CD4-positive, alpha-beta memory T cell (primary cell): ENCODE measurements at regions of chr10 and their contacts with region 1.

Region 1: DNA sequence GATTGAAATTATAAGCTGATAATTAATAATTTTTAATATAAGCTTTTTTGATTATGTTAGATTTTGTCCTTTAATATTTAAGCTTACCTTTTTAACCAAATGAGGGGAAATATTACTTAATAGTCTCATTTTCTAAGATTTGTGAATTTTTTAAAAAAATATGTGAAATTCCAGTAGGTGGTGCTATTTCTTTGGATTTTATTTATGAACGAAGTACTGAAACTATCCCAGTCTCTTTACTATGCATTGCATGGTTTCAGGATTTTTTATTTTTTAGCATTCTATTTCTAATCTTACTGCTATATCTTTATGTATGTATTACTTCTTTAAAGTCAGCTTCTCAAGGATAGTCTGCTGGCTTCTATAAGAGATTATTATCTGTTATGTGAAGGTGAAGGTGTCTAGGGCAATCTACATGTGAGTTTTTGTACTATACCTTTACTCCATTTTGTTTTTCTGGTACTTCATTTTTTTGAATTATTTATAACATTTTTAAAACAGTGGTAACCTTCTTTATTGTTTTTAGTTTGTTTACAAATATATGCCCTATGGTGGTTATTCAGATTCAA is 78.3 kb downstream of the ATRNL1 start:
- DNase-seq: no peak
- H3K4me3 ChIP-seq: no peak overlapping the region
- H3K4me3 Mint-ChIP-seq: no peak overlapping the region
- H3K27ac ChIP-seq: no peak overlapping the region
- H3K27ac Mint-ChIP-seq: no peak overlapping the region
- H3K4me1 ChIP-seq: no peaks in the 10 kb centered on the region
- H3K4me1 Mint-ChIP-seq: peaks cover 0 to 1% (median 0%) of the 10 kb centered on the region in 4 donors
- H3K27me3 ChIP-seq: no peaks in the 10 kb centered on the region
- H3K27me3 Mint-ChIP-seq: peaks cover 0 to 2% of the 10 kb centered on the region in 2 donors

Region 2: GRCh38 chr10:115379064-115379463 is 207.6 kb after region 1 on chr10:
- CTCF ChIA-PET with region 1: no interaction called
- POLR2A ChIA-PET with region 1: no interaction called
- intact Hi-C with region 1: no loop called
- DNase-seq: no peak
- H3K4me3 ChIP-seq: no peak overlapping the region
- H3K4me3 Mint-ChIP-seq: no peak overlapping the region
- H3K27ac ChIP-seq: no peak overlapping the region
- H3K27ac Mint-ChIP-seq: no peak overlapping the region
- H3K4me1 ChIP-seq: no peaks in the 10 kb centered on the region
- H3K4me1 Mint-ChIP-seq: no peaks in the 10 kb centered on the region
- H3K27me3 ChIP-seq: no peaks in the 10 kb centered on the region
- H3K27me3 Mint-ChIP-seq: no peaks in the 10 kb centered on the region

Region 3: DNA sequence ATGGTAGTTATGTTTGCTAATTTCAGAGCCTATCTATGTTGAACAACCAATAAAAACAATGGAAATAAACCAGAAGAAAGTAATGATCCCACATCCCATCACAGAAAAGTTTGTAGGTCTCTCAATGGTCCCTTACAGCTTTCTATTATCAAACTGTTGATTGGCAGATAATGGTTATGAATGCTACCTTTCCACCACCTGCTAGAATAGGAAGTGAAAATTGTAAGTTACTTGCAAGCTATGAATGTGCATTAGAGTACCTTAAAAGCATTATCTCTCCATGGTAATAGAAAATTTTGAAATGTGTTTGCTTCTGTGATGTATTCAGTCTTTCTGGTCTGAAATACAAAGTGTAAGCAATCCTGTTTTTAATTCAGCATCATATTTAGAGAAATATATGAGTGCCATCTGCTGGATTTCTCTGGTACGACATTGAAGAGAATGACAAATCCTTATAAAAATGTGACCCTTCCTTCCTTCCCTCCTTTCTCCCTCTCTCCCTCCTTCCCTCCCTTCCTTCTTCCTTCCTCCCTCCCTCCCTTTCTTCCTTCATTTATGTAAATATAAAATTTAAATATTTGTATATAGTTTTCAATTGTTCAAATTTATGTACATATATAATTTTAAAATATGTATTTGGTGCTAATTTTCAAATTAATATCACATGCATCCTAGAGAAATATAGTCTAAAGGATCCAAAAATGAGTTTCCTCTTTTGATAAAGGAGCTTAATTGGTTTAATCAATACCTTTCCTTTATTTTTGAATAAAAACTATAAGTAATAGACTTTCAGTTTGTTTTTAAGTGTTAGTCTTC is 1214.7 kb after region 1 on chr10:
- CTCF ChIA-PET with region 1: no interaction called
- POLR2A ChIA-PET with region 1: no interaction called
- intact Hi-C with region 1: loop called (anchors 2 kb)
- DNase-seq: no peak
- H3K4me3 ChIP-seq: no peak overlapping the region
- H3K4me3 Mint-ChIP-seq: no peak overlapping the region
- H3K27ac ChIP-seq: no peak overlapping the region
- H3K27ac Mint-ChIP-seq: no peak overlapping the region
- H3K4me1 ChIP-seq: no peaks in the 10 kb centered on the region
- H3K4me1 Mint-ChIP-seq: peaks cover 0 to 1% (median 0%) of the 10 kb centered on the region in 4 donors
- H3K27me3 ChIP-seq: no peaks in the 10 kb centered on the region
- H3K27me3 Mint-ChIP-seq: no peaks in the 10 kb centered on the region